Lower leg skin (tissue), 4 donors: ENCODE measurements at regions of chr12 and their contacts with region 1.

Region 1: DNA sequence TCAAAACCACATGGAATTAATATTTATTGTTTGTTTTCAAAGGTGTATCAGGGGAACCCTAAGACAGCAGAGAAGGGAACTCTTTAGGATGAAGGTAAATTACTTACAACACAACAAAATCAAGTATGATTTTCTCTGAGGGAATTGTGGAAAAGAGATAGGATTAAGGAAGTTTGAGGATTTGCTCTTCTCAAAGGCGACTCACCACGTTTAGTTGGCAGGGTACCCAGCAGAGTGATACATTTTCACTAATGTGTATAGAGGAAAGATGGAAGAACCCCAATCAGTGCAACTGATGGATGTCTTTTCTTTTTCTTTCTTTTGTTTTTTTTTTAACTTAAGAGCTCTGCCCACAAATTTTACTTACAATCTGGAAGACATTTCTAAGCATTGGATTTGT is 499.2 kb downstream of the CCER1 start:
- DNase-seq: no peak
- H3K4me3 ChIP-seq: no peak overlapping the region
- CTCF ChIP-seq: no peak
- POLR2A ChIP-seq: no peak

Region 2: GRCh38 chr12:90484094-90484493 is 28.3 kb after region 1 on chr12:
- intact Hi-C with region 1: no loop called
- DNase-seq: no peak
- H3K4me3 ChIP-seq: no peak overlapping the region
- CTCF ChIP-seq: no peak
- POLR2A ChIP-seq: no peak

Region 3: GRCh38 chr12:90741611-90742010 is 285.9 kb after region 1 on chr12:
- intact Hi-C with region 1: no loop called
- DNase-seq: no peak
- H3K4me3 ChIP-seq: no peak overlapping the region
- CTCF ChIP-seq: no peak
- POLR2A ChIP-seq: no peak

Region 4: GRCh38 chr12:92051441-92051840 is 1595.7 kb after region 1 on chr12:
- intact Hi-C with region 1: loop called (anchors 5 kb)
- DNase-seq: no peak
- H3K4me3 ChIP-seq: no peak overlapping the region
- CTCF ChIP-seq: no peak
- POLR2A ChIP-seq: no peak